T-cell (primary cell): ENCODE measurements at regions of chr1 and their contacts with region 1.

Region 1: DNA sequence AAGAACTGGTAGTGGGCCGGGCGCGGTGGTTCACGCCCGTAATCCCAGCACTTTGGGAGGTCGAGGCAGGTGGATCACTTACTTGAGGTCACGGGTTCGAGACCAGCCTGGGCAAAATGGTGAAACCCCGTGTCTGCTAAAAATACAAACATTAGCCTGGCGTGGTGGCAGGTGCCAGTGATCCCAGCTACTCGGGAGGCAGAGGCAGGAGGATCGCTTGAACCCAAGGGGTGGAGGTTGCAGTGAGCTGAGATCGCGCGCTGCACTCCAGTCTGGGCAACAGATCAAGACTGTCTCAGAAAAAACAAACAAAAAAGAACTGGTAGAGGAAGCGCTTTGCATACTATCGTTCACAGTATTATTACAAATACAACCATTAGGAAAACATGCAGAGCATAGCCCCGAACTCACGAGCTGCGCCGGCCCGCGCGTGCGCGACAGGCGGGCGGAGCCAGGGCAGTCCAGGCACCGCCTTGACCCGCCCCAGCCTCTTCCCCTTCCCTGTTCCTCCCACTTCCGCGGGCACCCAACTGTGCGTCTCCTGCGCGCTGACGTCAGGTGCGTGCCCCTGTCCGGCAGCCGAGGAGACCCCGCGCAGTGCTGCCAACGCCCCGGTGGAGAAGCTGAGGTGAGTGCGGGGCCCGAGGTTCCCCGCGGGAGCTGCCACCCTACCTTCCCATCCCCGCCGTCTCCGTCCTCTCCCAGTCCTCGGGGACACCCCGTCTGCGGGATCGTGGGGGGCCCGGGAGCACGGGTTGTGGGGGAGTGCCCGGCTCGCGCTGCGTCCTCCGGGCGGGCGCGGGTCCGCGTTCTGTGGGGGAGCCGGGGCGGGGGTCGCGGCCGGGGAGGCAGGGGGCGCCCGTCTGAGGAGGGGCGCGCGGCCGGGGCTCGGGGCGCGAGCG is at the start of gene CDC42:
- DNase-seq: peak; percentile 92 to 99 (median 97)
- ATAC-seq: peak; percentile 92 to 96 (median 93)
- H3K4me3 ChIP-seq: peak within 1 kb of the TSS; percentile 63 to 72
- H3K4me3 Mint-ChIP-seq: peak within 1 kb of the TSS; percentile 94 to 99 (median 97)
- H3K27ac ChIP-seq: peak within 1 kb of the TSS; percentile 91
- H3K27ac Mint-ChIP-seq: peak within 1 kb of the TSS; percentile 95 to 98
- H3K4me1 ChIP-seq: peaks cover 30 to 51% of the 10 kb centered on the region in 2 experiments
- H3K4me1 Mint-ChIP-seq: peaks cover 65 to 69% (median 67%) of the 10 kb centered on the region in 3 donors
- H3K27me3 ChIP-seq: no peaks in the 10 kb centered on the region
- H3K27me3 Mint-ChIP-seq: no peaks in the 10 kb centered on the region
- total RNA-seq, gene CDC42: 181 to 348 (median 192) TPM

Region 2: DNA sequence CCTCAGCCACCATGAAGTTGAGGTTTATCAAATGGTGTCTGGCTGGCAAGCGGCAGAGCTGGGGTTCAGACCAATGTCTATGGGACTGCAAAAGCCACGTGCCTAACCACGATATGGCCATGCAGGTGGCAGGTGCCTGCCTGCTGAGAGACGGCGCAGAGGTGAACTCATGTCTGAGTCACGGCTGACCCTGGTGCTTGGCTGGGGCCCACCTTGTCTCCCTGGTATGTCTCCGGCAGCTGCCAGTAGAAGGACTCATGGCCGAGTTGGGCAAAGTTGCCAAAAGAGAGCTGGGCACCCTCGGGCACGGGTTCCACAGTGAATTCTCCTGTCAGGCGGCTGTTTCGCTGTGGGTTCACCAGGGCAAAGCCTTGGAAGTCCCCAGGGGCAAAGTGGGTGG is 180.4 kb before region 1 on chr1:
- CTCF ChIA-PET with region 1: no interaction called
- POLR2A ChIA-PET with region 1: no interaction called
- DNase-seq: no peak
- ATAC-seq: no peak
- H3K4me3 ChIP-seq: no peak overlapping the region
- H3K4me3 Mint-ChIP-seq: no peak overlapping the region
- H3K27ac ChIP-seq: no peak overlapping the region
- H3K27ac Mint-ChIP-seq: no peak overlapping the region
- H3K4me1 ChIP-seq: no peaks in the 10 kb centered on the region
- H3K4me1 Mint-ChIP-seq: no peaks in the 10 kb centered on the region
- H3K27me3 ChIP-seq: peaks cover 0 to 7% of the 10 kb centered on the region in 2 experiments
- H3K27me3 Mint-ChIP-seq: peaks cover 0 to 1% of the 10 kb centered on the region in 2 donors

Region 3: DNA sequence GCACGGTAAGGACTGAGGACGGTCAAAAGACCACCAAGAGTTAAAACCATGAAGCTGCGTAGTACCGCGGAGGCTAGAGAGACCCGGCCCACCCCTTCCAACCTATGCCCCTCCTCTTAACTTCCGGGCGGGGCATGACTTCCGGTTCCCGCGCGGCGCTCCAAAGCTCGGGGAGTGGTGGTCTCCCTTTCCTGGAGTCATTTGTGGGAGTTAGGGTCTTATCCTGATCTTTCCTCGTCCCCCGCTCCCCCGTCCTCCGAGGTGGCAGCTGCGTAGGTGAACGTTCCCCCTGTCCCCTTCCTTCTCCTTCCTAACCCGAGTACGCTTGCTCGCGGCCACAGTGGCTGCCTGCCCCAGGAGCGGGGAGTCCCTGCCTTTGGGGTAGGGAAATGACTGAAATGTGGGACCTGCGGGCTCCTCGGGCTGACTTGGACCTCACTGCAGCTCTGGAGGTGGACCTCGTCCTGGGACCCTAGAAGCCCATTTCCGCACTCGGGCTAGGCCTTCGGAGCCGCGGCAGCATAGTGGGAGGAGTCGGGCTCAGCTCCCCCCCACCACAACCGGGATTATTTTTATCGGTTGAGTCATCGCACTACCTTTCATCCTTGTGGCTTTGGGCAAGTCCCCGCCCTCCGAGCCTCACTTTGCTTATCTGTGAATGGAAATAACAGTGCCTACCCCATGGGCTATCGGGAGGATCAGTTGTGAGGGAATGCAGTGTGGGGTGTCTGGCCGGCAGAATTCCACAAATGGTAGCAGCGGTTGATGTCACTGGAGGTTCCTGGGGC is 26.8 kb before region 1 on chr1:
- CTCF ChIA-PET with region 1: interaction called, 7 to 35 read pairs
- POLR2A ChIA-PET with region 1: interaction called, 13 to 84 read pairs
- DNase-seq: peak; percentile 77 to 92 (median 86)
- ATAC-seq: peak; percentile 76 to 84 (median 81)
- H3K4me3 ChIP-seq: peak overlapping the region; percentile 94 to 98
- H3K4me3 Mint-ChIP-seq: peak overlapping the region; percentile 90 to 95 (median 95)
- H3K27ac ChIP-seq: peak overlapping the region; percentile 99
- H3K27ac Mint-ChIP-seq: peak overlapping the region; percentile 95 to 96
- H3K4me1 ChIP-seq: peaks cover 19 to 47% of the 10 kb centered on the region in 2 experiments
- H3K4me1 Mint-ChIP-seq: peaks cover 51 to 68% (median 63%) of the 10 kb centered on the region in 3 donors
- H3K27me3 ChIP-seq: no peaks in the 10 kb centered on the region
- H3K27me3 Mint-ChIP-seq: no peaks in the 10 kb centered on the region

Region 4: DNA sequence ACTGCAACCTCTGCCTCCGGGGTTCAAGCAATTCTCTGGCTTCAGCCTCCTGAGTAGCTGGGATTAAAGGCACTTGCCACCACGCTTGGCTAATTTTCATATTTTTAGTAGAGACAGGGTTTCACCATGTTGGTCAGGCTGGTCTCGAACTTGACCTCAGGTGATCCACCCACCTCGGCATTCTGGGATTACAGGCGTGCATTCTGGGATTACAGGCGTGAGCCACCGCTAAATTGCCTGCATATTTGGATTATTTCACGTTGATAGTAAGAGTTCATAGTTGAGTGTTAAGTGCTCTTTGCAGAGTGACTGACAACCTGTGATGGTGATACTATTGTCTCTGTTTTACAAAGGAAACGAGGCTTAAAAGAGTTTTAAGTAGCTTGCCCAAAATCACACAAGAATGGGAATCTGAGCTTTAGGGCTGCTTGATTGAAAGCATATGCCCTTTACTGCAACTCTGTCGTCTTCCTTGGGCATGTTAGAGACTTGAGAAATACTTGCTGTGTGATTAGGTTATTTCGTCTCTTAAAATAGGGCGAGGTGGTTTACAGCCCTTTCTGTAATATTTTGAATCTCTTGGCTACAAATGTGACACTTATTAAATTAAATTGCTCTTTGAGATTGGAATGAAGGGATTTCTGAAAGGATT is 12.5 kb after region 1 on chr1:
- CTCF ChIA-PET with region 1: interaction called in 1 of 2 experiments, 4 read pairs
- POLR2A ChIA-PET with region 1: interaction called, 6 to 19 read pairs
- DNase-seq: no peak
- ATAC-seq: no peak
- H3K4me3 ChIP-seq: no peak overlapping the region
- H3K4me3 Mint-ChIP-seq: peak overlapping the region in 2 of 3 donors; percentile 45 to 66
- H3K27ac ChIP-seq: peak overlapping the region; percentile 6
- H3K27ac Mint-ChIP-seq: peak overlapping the region in 1 of 2 donors; percentile 72
- H3K4me1 ChIP-seq: peaks cover 48 to 77% of the 10 kb centered on the region in 2 experiments
- H3K4me1 Mint-ChIP-seq: peaks cover 90 to 93% (median 91%) of the 10 kb centered on the region in 3 donors
- H3K27me3 ChIP-seq: no peaks in the 10 kb centered on the region
- H3K27me3 Mint-ChIP-seq: no peaks in the 10 kb centered on the region